Esophagus muscularis mucosa (tissue), 4 donors: ENCODE measurements at regions of chr3 and their contacts with region 1.

Region 1: GRCh38 chr3:55485211-55485791 is 1.8 kb downstream of the WNT5A start:
- DNase-seq: no peak
- H3K4me3 ChIP-seq: peak overlapping the region; percentile 86 to 95 (median 90)
- H3K27ac ChIP-seq: peak overlapping the region; percentile 85 to 89 (median 86)
- H3K4me1 ChIP-seq: peaks cover 12 to 93% (median 88%) of the 10 kb centered on the region in 4 donors
- H3K27me3 ChIP-seq: peaks cover 0 to 61% (median 0%) of the 10 kb centered on the region in 4 donors
- CTCF ChIP-seq: peak in 2 of 3 experiments; percentile 39 to 96
- EP300 ChIP-seq: no peak
- POLR2A ChIP-seq: no peak

Region 2: GRCh38 chr3:54853573-54854404 is 631.5 kb before region 1 on chr3:
- intact Hi-C with region 1: loop called (anchors 2 kb)
- DNase-seq: peak; percentile 94
- H3K4me3 ChIP-seq: no peak overlapping the region
- H3K27ac ChIP-seq: peak overlapping the region in 2 of 4 donors; percentile 2 to 44
- H3K4me1 ChIP-seq: peaks cover 5 to 32% (median 27%) of the 10 kb centered on the region in 4 donors
- H3K27me3 ChIP-seq: no peaks in the 10 kb centered on the region
- CTCF ChIP-seq: peak; percentile 85 to 90 (median 90)
- EP300 ChIP-seq: no peak
- POLR2A ChIP-seq: no peak

Region 3: GRCh38 chr3:55198543-55198942 is 286.8 kb before region 1 on chr3:
- intact Hi-C with region 1: loop called (anchors 10 kb)
- DNase-seq: no peak
- H3K4me3 ChIP-seq: no peak overlapping the region
- H3K27ac ChIP-seq: no peak overlapping the region
- H3K4me1 ChIP-seq: no peaks in the 10 kb centered on the region
- H3K27me3 ChIP-seq: no peaks in the 10 kb centered on the region
- CTCF ChIP-seq: no peak
- EP300 ChIP-seq: no peak
- POLR2A ChIP-seq: no peak

Region 4: GRCh38 chr3:55426486-55426885 is 58.8 kb before region 1 on chr3:
- intact Hi-C with region 1: no loop called
- DNase-seq: no peak
- H3K4me3 ChIP-seq: no peak overlapping the region
- H3K27ac ChIP-seq: no peak overlapping the region
- H3K4me1 ChIP-seq: no peaks in the 10 kb centered on the region
- H3K27me3 ChIP-seq: no peaks in the 10 kb centered on the region
- CTCF ChIP-seq: no peak
- EP300 ChIP-seq: no peak
- POLR2A ChIP-seq: no peak

Region 5: DNA sequence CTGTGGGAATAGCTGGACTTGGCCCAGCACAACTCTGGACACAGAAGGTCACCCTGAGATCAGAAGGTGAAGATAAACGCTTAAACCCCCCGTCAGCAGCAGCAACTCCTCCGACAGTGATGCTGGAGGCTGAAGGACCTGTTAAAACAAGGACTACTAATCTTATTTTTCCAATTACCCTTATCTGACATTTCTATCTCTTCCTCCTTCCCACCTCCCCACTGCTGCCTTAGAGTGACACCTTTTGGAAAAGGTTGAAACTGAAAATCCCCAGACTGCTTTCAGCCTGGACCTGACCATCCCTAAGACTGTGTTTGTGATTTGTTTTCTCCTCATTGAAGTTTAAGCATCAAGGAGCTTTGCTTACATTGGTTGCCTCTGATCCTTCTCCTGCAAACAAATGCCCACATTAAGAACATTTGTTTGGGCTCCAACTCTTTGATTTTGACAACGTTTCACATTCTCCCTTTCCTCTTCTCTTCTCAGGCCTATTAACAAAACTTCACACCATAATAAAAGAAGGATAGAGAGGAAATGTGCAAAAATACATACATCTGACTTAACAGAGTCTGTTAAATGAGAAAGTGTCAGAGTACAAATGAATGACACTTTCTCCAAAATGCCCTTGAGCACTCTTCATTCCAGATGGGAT is 412.4 kb after region 1 on chr3:
- intact Hi-C with region 1: loop called (anchors 10 kb)
- DNase-seq: peak; percentile 77
- H3K4me3 ChIP-seq: no peak overlapping the region
- H3K27ac ChIP-seq: no peak overlapping the region
- H3K4me1 ChIP-seq: no peaks in the 10 kb centered on the region
- H3K27me3 ChIP-seq: no peaks in the 10 kb centered on the region
- CTCF ChIP-seq: peak; percentile 12 to 50 (median 39)
- EP300 ChIP-seq: no peak
- POLR2A ChIP-seq: no peak

Region 6: DNA sequence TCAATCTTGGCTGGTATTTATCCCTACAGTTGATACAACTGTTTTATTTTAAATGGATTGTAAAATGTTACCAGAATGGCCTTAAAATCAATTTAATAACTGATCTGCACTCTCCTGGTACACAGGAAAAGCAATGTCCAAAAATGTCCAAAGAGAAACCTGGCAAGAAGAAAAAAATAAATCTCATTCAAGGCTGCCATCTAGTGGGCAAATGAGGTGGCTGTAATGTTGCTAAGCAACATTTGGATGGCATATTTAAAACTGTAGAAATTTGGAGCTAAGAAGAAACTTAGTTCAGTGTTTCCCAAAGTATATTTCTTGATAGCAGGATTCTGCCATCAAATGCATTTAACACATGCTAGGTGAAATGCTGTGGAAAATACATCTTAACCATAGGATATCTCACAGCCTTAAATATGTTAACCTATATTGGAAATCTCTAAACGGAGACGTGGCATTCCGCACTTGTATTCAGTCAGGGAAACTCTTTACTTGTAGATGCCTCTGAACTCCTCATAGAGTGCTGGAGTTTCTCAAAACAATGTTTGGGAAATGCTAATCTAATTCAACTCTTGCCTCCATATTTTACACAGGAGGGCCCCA is 766.1 kb after region 1 on chr3:
- intact Hi-C with region 1: loop called (anchors 5 kb)
- DNase-seq: no peak
- H3K4me3 ChIP-seq: no peak overlapping the region
- H3K27ac ChIP-seq: no peak overlapping the region
- H3K4me1 ChIP-seq: no peaks in the 10 kb centered on the region
- H3K27me3 ChIP-seq: no peaks in the 10 kb centered on the region
- CTCF ChIP-seq: peak; percentile 71 to 82 (median 81)
- EP300 ChIP-seq: no peak
- POLR2A ChIP-seq: no peak